Prostate gland (tissue), 2 donors: ENCODE measurements at regions of chr12 and their contacts with region 1.

Region 1: DNA sequence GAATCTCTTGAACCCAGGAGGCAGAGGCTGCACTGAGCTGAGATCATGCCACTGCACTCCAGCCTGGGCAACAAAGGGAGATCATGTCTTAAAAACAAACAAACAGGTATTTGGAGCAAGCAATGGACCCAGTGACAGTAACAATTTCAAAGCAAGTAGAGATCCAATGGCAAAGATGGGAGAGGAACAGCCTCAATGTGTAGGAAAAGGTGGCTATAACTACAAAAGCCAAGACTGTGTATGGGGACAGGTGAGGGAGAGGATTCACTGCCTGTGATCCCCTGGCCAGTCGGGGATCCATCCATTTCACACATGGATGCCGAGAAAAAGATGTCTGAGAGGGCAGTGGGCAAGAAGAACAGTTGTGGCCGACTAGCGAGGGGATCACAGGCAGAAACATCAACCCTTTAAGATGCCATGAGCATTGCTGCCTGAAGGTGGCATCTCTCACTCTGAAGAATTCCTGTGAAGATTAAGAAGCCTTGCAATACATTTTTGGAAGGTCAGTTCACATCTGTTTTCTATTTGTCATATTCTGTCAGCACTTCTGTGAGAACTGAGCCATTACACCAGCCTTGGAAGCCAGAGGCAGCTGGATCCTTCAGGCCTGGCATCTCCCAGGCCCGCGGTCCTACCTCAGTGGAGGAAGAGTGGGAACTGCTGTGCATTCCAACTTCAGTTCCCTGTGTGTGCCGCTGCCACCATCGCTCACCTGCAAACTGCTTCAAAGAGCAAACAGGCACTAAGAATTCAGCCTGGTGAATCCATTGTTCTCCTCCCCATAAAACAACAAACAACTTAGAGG is 54.5 kb upstream of the FRS2 start:
- DNase-seq: peak; percentile 36
- H3K4me3 ChIP-seq: no peak overlapping the region
- H3K27ac ChIP-seq: no peak overlapping the region
- H3K4me1 ChIP-seq: no peaks in the 10 kb centered on the region
- H3K27me3 ChIP-seq: no peaks in the 10 kb centered on the region
- CTCF ChIP-seq: peak; percentile 13 to 79 (median 72)
- POLR2A ChIP-seq: no peak

Region 2: DNA sequence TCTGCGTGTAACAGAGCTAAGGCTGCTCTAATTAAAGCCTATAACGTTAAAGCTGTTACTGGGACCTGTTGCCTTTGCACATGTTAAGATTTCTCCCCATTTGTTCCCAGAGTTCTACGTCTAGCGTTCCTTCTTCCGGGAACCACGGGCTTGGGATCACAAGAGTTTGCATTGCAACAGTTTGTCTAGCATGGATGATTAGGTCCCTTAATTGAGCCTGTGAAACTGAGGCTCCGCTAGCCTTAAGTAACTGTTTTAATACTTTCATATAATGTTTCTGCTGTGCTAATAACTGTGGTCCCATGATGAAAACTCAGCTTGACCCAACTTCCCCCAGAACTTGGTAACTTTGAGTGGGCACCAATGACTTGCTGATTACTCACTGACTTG is 84.2 kb before region 1 on chr12:
- intact Hi-C with region 1: no loop called
- DNase-seq: no peak
- H3K4me3 ChIP-seq: peak overlapping the region; percentile 15 to 34
- H3K27ac ChIP-seq: peak overlapping the region; percentile 39 to 60
- H3K4me1 ChIP-seq: peaks cover 3% of the 10 kb centered on the region
- H3K27me3 ChIP-seq: no peaks in the 10 kb centered on the region
- CTCF ChIP-seq: no peak
- POLR2A ChIP-seq: no peak

Region 3: DNA sequence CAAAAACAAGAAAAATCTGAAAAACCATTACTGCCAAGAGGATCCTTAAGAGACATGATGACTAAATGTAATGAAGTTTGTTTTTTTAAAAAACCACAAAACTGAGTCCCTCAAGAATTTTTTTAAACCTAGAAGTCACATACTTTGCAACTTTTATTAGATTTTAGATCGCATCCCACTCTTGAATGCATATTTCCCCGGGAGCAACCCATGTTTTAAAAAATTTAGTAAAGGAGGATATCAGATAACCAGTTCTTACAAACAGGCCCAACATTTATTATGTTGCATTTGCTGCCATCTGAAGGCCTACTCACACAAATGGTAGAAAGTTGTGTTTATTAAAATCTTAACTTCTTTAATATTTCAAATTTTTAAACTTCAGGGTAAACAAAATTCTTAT is 125.3 kb after region 1 on chr12:
- intact Hi-C with region 1: loop called (anchors 10 kb)
- DNase-seq: no peak
- H3K4me3 ChIP-seq: no peak overlapping the region
- H3K27ac ChIP-seq: no peak overlapping the region
- H3K4me1 ChIP-seq: no peaks in the 10 kb centered on the region
- H3K27me3 ChIP-seq: no peaks in the 10 kb centered on the region
- CTCF ChIP-seq: no peak
- POLR2A ChIP-seq: no peak

Region 4: DNA sequence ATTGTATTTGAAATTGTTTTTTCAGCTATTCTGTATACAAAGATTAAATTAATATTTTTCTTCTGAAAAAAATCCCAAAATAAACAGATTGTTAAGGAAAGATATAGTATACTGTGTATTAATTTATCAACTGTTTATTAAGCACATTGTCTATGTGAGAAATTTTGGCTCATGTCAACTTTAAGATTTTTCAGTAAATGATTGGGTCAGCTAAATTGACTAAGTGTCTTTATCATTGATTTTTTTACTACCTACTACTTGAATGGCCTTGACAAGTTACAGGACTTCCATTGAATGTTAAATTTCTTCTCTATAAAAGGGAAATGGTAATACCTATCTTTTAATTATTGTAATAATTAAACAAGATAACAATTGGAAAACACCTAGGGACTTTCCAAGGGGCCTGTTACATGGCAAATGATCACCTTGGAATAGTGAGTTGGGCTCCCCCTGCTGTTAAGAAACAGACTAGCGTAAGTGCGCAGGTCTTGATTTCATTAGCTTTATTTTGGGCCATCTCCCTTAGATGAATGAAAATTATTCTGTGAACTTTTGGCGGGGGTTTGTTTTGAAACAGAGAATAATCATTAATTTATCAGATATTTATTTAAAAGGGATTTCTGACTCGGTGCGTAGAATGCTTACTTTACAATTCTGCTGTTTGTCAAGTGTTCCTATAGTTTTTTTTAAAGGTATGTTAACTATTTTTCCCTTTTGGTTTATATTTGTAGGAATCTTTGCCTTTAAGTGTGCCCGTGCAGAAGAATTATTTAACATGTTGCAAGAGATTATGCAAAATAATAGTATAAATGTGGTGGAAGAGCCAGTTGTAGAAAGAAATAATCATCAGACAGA is 155.1 kb after region 1 on chr12:
- intact Hi-C with region 1: loop called (anchors 5 kb)
- DNase-seq: peak; percentile 49
- H3K4me3 ChIP-seq: no peak overlapping the region
- H3K27ac ChIP-seq: no peak overlapping the region
- H3K4me1 ChIP-seq: no peaks in the 10 kb centered on the region
- H3K27me3 ChIP-seq: no peaks in the 10 kb centered on the region
- CTCF ChIP-seq: peak; percentile 55 to 75 (median 70)
- POLR2A ChIP-seq: no peak